Cardiac septum (tissue), 1 donor: ENCODE measurements at regions of chr22 and their contacts with region 1.

Region 1: DNA sequence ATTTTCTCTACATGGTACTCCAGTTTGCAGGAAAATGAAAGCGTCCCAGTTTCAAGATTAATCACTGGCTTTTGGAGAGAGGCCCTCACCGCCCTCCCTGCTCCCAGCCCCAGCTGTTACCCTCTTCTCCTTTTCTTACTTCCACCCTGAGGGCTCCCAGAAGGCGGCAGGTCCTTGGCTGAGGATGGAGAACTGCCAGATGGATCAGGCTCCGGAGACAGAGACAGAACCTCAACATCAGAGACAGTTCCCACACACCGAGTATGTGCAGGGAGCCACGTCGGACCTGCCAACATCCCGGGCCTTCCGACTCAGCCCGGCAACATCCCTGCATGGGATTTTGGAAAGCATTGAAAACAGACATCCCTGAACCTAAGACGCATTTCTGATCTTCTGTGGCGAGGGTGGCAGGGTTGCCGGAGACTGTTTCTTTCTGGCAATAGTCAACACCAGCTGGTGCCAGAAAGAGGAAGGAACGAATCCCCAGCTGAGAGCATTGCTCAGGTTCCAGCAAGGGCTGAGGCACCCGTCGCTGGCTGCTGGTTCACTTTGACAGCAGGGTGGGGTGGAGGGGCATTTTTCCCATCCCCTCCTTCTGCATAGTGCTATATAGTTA is 467.1 kb downstream of the MIAT start:
- DNase-seq: no peak

Region 2: DNA sequence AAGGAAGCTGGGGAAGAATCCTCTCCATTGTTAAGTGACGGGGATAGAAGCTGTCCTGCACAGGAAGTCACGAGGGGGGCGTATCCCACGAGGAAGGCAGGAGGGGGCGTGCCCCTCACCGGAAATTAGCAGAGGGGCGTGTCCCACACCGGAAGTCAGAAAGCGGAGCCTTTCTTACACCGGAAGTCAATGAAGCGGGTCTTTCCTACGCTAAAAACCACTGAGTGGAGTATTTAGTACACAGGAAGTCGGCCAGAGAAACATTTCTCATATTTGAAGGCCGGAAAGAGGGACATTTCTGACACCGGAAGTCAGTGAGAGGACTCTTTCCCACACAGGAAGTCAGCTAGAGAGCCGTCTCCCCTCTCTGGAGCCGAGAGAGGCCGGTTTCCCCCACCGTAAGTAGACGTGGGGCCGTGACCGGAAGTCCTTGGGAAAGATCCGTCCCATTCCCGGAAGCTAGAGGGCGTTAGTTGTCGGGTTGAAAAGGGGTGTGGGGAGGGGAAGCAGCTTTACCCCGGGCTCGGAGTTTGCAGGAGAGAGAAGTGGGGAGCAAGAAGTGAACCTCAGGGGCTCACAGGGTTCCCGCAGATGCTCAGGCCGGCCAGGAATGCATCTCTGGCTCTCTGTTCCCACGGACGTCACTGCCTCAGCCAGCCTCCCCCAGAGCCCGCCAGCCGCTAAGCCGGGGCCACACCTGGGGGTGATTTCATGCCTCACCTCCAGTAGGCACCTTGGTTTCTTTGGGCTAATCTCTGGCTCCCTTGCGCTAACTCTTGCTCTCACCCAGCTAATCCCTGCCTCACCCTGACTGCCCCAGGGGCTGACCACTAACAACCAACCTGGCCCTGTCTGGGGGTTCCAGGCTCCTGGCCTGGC is 451.6 kb before region 1 on chr22:
- intact Hi-C with region 1: loop called (anchors 10 kb)
- DNase-seq: peak; percentile 96

Region 3: DNA sequence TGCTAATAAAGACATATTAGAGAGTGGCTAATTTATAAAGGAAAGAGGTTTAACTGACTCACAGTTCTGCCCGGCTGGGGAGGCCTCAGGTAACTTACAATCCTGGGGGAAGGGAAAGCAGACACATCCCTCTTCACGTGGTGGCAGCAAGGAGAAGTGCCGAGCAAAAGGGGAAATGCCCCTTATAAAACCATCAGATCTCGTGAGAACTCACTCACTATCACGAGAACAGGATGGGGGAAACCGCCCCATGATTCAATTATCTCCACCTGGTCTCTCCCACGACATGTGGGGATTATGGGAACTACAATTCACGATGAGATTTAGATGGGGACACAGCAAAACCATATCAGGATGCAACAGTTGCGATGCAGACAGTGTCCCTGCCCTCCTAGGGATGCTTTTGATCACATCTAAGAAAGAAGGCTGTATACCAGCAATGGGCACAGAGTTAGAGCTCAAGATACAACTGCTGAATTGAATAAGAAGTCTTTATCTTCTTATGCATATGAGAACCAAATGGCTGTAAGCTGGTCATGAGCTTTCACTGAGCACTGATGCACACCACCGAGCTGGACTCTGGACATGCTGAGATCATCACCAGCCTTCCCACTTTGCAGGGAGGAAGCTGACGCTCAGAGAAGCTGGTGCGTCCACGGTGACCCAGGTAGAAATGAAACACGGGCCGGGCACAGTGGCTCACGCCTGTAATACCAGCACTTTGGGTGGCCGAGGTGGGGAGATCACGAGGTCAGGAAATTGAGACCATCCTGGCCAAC is 421.9 kb after region 1 on chr22:
- intact Hi-C with region 1: no loop called
- DNase-seq: no peak